ENCODE measurements at regions of chr19 and their contacts with region 1.

Region 1: DNA sequence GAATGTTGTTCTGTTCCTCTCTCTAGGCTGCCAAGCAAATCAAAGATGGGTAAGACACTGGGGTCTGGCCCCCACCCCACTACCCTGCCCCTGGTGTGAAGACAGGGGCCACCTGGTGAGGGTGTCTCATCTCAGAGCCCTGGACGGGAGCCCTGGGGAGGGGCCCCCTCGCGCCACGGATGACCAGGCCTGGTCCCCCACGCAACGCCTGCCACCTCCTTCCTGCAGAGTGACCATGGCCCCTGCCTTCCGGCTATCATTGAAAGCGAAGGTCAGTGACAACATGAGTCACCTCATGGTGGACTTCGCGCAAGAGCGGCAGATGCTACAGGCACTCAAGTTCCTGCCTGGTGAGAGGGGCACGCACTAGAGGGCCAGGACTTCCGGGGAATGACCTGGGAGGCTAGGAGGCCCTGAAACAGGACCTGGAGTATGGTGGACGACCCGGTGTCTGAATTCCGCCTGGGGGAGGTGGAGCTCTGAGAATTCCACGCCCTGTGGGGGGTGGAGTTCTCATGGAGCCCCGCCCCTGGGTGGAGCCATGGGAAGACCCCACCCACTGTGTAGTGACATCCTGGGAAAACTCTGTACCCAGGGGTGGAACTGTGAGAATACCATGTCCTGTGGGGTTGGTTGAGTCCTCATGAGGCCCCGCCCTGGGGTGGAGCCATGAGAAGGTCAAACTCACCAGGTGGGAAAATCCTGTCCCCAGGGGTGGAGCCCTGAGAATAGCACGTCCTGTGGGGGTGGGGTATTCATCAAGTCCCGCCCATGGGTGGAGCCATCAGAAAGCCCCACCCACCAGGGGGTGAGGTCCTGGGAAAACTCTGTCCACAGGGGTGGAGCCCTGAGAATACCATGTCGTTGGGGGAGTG is 6.1 kb downstream of the FSD1 start:
- DNase-seq: peak; percentile 94
- ATAC-seq: peak; percentile 93
- H3K4me3 ChIP-seq: peak overlapping the region in 1 of 3 experiments; percentile 33; a peak in 2 of 6 replicates
- H3K27ac ChIP-seq: peak overlapping the region; percentile 77
- H3K4me1 ChIP-seq: peaks cover 60% of the 10 kb centered on the region
- H3K27me3 ChIP-seq: peaks cover 3% of the 10 kb centered on the region in 2 experiments; a peak in 2 of 5 replicates
- CTCF ChIP-seq: peak; percentile 45; the same call in 1 of the 2 replicates
- EP300 ChIP-seq: peak in 1 of 2 experiments; percentile 59; a peak in 3 of 4 replicates
- POLR2A ChIP-seq: peak; percentile 63 to 66
- RAD21 ChIP-seq: peak; percentile 40; the same call in 1 of the 2 replicates

Region 2: DNA sequence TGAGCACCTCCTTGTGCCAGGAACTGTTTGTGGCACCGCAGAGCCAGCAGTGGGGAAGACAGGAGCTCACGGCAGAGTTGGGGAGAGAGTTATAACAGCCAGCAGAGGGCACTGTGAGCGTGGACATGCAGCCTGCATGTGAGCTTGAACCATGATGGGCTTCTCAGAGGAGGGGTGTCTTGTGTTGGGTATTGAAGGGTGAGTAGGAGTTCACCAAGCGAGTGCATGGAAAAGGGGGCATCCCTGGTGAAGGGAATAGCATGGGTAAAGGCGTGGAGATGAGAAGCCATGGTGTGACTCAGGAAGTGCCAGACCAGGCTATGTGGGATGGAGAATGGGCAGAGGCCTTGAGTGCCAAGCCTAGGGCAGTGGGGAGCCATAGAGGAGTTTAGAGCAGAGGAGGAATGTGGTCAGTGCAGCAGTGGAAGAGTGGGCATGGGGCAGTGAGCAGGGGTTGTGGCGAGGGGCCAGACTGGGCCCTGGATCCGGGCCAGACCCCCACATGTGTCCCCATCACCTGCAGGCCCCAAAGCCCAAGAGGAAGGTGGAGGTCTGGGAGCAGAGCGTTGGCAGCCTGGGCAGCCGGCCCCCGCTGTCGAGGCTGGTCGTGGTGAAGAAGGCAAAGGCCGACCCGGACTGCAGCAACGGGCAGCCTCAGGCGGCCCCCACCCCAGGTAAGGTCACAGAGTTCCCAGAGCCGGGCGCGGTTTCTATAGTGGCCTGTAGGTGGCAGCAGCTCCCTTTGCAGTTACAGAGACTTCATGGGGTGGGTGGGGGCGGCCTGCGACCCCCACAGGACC is 43.2 kb before region 1 on chr19:
- CTCF ChIA-PET with region 1: interaction called, 4 read pairs
- POLR2A ChIA-PET with region 1: interaction called, 5 read pairs
- in situ Hi-C with region 1: no loop called
- intact Hi-C with region 1: loop called (anchors 2 kb)
- DNase-seq: peak; percentile 72
- ATAC-seq: peak; percentile 88
- H3K4me3 ChIP-seq: no peak overlapping the region
- H3K27ac ChIP-seq: peak overlapping the region; percentile 73
- H3K4me1 ChIP-seq: peaks cover 20% of the 10 kb centered on the region
- H3K27me3 ChIP-seq: no peaks in the 10 kb centered on the region
- CTCF ChIP-seq: peak; percentile 90
- EP300 ChIP-seq: no peak
- POLR2A ChIP-seq: no peak
- RAD21 ChIP-seq: peak; percentile 72

Region 3: GRCh38 chr19:4284176-4284958 is 26.1 kb before region 1 on chr19:
- CTCF ChIA-PET with region 1: no interaction called
- POLR2A ChIA-PET with region 1: interaction called, 19 read pairs
- in situ Hi-C with region 1: no loop called
- intact Hi-C with region 1: no loop called
- DNase-seq: peak; percentile 81
- ATAC-seq: peak; percentile 98
- H3K4me3 ChIP-seq: peak overlapping the region; percentile 38 to 72 (median 47)
- H3K27ac ChIP-seq: no peak overlapping the region
- H3K4me1 ChIP-seq: peaks cover 17% of the 10 kb centered on the region
- H3K27me3 ChIP-seq: peaks cover 0 to 29% of the 10 kb centered on the region in 2 experiments; a peak in 3 of 5 replicates
- CTCF ChIP-seq: no peak
- EP300 ChIP-seq: no peak
- POLR2A ChIP-seq: no peak
- RAD21 ChIP-seq: no peak

Region 4: DNA sequence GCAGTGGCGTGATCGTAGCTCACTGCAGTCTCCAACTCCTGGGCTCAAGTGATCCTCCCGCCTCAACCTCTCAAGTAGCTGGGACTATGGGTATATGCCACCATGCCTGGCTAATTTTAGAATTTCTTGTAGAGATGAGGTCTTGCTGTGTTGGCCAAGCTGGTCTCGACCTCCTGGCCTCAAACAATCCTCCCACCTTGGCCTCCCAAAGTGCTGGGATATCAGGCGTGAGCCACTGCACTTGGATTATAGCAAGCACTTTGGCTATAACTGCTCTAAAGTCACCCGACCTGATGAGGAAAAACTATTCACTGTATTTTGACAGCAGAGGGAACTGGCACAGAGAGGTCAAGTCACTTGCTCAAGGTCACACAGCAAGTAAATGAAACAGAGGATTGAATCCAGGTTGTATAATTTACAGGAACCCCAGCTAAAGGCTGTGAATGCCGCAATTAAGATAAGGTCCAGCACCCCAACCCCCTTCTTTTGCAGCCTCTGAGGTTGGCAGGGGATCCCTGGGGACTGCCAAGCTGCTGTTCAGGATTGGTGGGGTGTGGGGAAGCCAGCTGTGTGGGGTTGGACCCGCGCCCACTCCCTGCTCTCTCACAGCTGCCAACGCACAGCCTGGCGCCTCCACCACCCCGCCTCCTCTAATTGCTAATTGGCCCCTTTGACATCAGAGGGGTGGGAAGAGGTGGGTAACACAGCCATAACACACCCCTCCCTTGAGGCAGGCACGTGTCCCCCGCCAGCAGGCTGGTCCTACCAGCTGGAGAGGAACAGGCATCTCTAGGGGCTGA is 14.3 kb before region 1 on chr19:
- CTCF ChIA-PET with region 1: no interaction called
- POLR2A ChIA-PET with region 1: interaction called, 19 read pairs
- in situ Hi-C with region 1: no loop called
- intact Hi-C with region 1: no loop called
- DNase-seq: no peak
- ATAC-seq: no peak
- H3K4me3 ChIP-seq: no peak overlapping the region
- H3K27ac ChIP-seq: no peak overlapping the region
- H3K4me1 ChIP-seq: peaks cover 7% of the 10 kb centered on the region; the same call in 1 of the 2 replicates
- H3K27me3 ChIP-seq: peaks cover 0 to 2% of the 10 kb centered on the region in 2 experiments; a peak in 1 of 5 replicates
- CTCF ChIP-seq: no peak
- EP300 ChIP-seq: no peak
- POLR2A ChIP-seq: no peak
- RAD21 ChIP-seq: no peak

Region 5: GRCh38 chr19:4322942-4323665 is 12.6 kb after region 1 on chr19:
- CTCF ChIA-PET with region 1: no interaction called
- POLR2A ChIA-PET with region 1: interaction called, 17 read pairs
- in situ Hi-C with region 1: no loop called
- intact Hi-C with region 1: no loop called
- DNase-seq: no peak
- ATAC-seq: peak; percentile 28; the same call in 2 of the 3 replicates
- H3K4me3 ChIP-seq: no peak overlapping the region
- H3K27ac ChIP-seq: no peak overlapping the region
- H3K4me1 ChIP-seq: no peaks in the 10 kb centered on the region
- H3K27me3 ChIP-seq: no peaks in the 10 kb centered on the region
- CTCF ChIP-seq: no peak
- EP300 ChIP-seq: no peak
- POLR2A ChIP-seq: no peak
- RAD21 ChIP-seq: no peak